Activated CD4-positive, alpha-beta memory T cell treated with anti-CD3 and anti-CD28 coated beads for 36 hours (primary cell): ENCODE measurements at regions of chr7 and their contacts with region 1.

Region 1: DNA sequence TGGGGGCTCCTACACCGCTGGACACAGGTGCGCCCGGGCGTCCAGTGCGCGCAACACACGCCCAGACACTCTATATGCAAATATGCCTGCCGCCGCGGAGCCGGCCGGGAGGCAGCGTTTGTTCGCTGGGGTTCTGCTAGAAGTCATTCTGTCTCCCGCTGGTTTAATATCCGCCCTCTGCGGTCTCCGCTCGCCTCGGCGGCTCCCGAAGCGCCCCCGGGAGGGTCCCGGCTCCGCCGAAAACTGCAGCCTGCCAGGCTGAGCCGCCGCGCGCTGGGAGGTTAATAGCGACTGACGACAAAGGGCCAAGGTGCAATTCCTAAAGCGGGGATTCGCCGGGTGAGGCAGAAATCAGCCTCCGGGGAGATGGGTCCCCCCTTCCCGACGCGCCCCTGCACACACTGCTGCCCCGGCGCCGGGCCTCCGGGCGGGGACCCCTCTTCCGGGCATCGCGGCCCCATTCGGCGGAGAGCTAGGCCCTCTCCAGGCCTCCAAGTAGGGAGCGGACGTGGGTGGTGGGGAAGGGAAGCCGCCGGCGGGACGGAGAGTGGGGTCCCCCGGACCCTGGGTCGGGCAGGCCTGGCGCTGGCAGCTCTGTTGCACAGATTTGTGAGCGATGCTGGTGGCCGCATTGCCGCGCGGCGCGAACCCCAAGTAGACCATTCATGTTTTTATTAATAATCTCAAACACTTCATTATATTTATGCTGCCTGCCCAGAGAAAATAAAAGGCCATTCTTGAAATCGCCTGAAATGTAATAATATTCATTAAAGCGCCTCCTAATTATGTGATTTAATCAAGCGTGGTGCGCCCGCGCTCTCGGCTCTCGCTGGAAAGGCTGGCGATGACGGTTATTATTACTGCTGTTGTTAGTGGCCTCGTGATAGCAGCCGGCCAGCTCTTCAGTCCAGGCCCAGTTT is 9.1 kb downstream of the EN2 start:
- DNase-seq: peak; percentile 59
- H3K4me3 Mint-ChIP-seq: no peak overlapping the region
- H3K27ac Mint-ChIP-seq: no peak overlapping the region
- H3K4me1 Mint-ChIP-seq: peaks cover 19% of the 10 kb centered on the region
- H3K27me3 Mint-ChIP-seq: peaks cover 77% of the 10 kb centered on the region

Region 2: DNA sequence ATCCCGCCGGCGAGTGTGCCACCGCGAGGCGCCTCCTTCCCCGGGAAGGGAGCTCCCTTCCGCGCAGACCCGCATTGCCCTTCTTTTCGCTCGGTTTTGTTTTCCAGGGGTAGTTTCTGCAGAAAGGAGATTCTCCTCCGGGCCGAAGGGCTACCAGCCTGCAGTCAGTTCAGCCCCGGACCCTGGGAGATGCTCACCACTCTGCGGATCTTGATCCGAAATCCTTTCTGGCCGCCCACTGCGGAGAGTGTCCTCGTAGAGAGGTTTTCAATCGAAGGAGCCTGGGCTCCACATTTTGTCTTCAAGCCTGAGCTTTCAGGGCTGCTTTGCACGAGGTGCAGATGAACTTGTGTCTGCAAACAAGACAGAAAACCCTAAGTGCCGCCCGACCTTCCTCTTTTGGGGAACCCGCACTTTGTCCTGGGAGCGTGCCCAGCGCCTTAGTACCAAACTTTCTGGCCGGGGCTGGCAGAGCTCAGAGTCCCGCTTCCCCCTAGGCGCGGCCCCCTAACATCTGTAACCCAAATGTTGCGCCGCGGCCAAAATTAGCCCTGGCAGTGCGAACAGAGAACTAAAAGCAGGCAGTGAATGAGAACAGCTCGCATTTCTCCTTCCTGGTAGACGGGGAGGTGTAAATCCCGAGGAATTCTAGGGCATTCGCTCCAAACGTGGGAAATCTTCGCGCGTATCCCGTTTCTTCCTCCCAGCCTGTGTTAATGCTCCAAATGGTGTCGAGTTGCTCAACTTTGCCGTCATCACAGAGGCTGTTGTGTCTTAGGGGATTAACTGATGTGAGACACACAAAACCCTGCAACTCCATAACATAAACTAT is 15.9 kb before region 1 on chr7:
- CTCF ChIA-PET with region 1: interaction called, 3 read pairs
- POLR2A ChIA-PET with region 1: no interaction called
- intact Hi-C with region 1: loop called (anchors 2 kb)
- DNase-seq: no peak
- H3K4me3 Mint-ChIP-seq: no peak overlapping the region
- H3K27ac Mint-ChIP-seq: no peak overlapping the region
- H3K4me1 Mint-ChIP-seq: peaks cover 14% of the 10 kb centered on the region
- H3K27me3 Mint-ChIP-seq: peaks cover 69% of the 10 kb centered on the region